Activated B cell treated with CpG ODN at 0.5 μM for 24 hours (primary cell): ENCODE measurements at regions of chr12 and their contacts with region 1.

Region 1: GRCh38 chr12:6778574-6779550 is 6.5 kb downstream of the LAG3 start:
- DNase-seq: peak; percentile 77
- ATAC-seq: peak; percentile 98
- H3K4me3 Mint-ChIP-seq: peak overlapping the region; percentile 74
- H3K27ac Mint-ChIP-seq: peak overlapping the region; percentile 4
- H3K4me1 Mint-ChIP-seq: peaks cover 9% of the 10 kb centered on the region
- H3K27me3 Mint-ChIP-seq: peaks cover 42% of the 10 kb centered on the region
- CTCF ChIP-seq: peak; percentile 68

Region 2: DNA sequence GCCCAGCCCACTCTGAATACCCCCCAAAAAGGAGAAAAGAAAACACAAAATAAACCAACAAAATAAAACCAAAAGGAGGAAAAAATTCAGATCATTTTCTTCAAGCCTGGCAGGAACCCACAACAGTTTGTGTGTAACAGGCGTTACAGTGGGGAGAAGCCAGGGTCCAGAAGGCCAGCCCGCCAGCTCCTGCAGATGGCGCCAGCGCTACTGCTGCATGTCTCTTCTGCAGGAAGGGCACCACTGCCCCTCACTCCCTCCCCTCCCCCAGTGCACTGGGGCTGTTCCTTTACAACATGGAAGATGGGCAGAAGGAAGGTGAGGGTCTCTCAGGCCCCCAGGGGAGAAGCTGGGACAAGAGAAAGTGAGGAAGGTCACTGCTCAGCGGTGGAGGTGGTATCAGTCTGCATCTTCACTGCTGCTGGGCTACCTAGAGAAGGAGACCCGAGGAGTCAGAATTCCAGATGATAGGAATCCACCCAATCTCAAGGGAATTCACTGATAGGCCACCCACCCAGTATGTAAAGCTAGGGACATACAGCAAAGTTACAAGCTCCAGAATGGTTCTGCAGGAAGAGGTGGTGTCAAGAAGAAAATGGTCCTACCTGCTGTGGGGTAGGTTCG is 208.5 kb before region 1 on chr12:
- CTCF ChIA-PET with region 1: no interaction called
- POLR2A ChIA-PET with region 1: no interaction called
- intact Hi-C with region 1: no loop called
- DNase-seq: peak; percentile 37
- ATAC-seq: no peak
- H3K4me3 Mint-ChIP-seq: no peak overlapping the region
- H3K27ac Mint-ChIP-seq: peak overlapping the region; percentile 41
- H3K4me1 Mint-ChIP-seq: peaks cover 28% of the 10 kb centered on the region
- H3K27me3 Mint-ChIP-seq: no peaks in the 10 kb centered on the region
- CTCF ChIP-seq: no peak

Region 3: DNA sequence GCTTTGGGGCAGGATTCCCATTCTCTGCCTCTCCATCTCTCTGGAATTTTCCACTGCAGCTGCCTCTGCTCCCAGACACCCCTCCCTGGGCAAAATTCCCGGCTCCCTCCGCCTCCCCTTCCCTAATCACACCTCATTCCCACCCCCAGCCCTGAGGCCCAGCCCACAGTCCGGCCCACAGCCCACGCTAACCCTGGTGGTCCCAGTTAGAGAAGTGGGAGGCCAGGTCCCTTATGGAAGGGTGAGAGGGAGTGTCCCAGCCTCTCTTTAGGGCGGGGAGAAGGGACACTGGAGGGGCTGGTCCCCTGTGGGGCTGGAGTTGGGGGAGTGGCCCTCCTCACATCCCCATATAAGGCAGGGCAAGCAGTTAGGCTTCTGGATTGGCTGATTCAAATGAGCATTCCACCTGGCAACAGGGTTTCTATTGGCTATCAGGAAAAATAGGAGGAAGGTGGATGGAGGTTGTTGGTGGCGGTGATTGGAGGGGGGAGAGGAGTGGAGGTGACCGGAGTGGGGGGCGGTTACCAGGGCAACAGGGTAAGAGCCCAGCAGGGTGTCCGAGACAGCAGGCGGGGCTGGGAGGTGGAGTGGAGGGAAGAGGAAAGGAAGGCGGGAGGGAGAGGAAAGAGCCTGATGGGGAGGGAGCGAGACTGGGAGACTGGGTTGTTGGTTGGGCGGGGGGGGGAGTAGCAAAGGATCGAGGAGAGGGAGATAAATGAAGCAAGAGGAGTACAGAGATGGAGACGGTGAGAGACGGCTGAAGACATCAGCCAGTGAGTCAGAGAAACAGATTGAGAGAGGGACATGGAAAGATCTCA is 14.6 kb before region 1 on chr12:
- CTCF ChIA-PET with region 1: interaction called, 10 read pairs
- POLR2A ChIA-PET with region 1: interaction called, 4 read pairs
- intact Hi-C with region 1: loop called (anchors 1 kb)
- DNase-seq: peak; percentile 26
- ATAC-seq: peak; percentile 83
- H3K4me3 Mint-ChIP-seq: peak overlapping the region; percentile 55
- H3K27ac Mint-ChIP-seq: no peak overlapping the region
- H3K4me1 Mint-ChIP-seq: peaks cover 29% of the 10 kb centered on the region
- H3K27me3 Mint-ChIP-seq: peaks cover 31% of the 10 kb centered on the region
- CTCF ChIP-seq: no peak

Region 4: DNA sequence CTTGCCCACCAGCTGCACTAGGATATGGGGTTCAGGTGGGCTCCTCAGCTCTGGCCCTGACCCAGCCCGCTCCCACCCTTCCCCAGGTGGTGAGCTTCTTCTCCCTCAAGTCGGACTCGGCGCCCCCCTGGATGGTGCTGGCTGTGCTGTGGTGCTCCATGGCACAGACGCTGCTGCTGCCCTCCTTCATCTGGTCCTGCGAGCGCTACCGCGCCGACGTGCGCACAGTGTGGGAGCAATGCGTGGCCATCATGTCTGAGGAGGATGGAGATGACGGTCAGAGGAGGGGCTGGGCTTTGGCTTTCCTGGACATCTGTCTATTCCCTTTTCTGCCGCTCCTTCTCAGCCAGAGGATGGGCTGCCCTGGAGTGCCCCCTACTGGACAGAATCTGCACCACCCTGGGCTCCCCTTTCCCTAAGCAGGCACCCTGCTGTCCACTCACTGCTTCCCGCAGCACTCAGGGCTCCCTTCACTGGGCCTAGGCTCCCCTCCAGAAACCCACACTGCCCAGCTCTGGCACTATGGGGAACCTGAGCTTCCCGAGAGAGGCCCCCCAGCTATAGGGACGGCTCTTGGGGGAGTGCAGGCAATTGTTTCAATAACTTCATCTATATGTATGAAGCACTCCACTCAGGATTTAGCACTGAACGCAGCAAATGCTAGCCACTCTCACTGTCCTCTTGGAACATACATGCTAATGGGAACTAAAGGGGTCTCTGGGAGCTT is 46.7 kb after region 1 on chr12:
- CTCF ChIA-PET with region 1: no interaction called
- POLR2A ChIA-PET with region 1: no interaction called
- intact Hi-C with region 1: loop called (anchors 1 kb)
- DNase-seq: peak; percentile 69
- ATAC-seq: peak; percentile 62
- H3K4me3 Mint-ChIP-seq: no peak overlapping the region
- H3K27ac Mint-ChIP-seq: no peak overlapping the region
- H3K4me1 Mint-ChIP-seq: peaks cover 32% of the 10 kb centered on the region
- H3K27me3 Mint-ChIP-seq: peaks cover 73% of the 10 kb centered on the region
- CTCF ChIP-seq: peak; percentile 47

Region 5: GRCh38 chr12:6873094-6874014 is 94.5 kb after region 1 on chr12 and contains the start of gene SPSB2:
- CTCF ChIA-PET with region 1: no interaction called
- POLR2A ChIA-PET with region 1: no interaction called
- intact Hi-C with region 1: no loop called
- DNase-seq: peak; percentile 100
- ATAC-seq: peak; percentile 88
- H3K4me3 Mint-ChIP-seq: peak within 1 kb of the TSS; percentile 88
- H3K27ac Mint-ChIP-seq: peak within 1 kb of the TSS; percentile 85
- H3K4me1 Mint-ChIP-seq: peaks cover 37% of the 10 kb centered on the region
- H3K27me3 Mint-ChIP-seq: no peaks in the 10 kb centered on the region
- CTCF ChIP-seq: no peak
- total RNA-seq, gene SPSB2: 14.4 and 16.2 TPM in 2 replicates

Region 6: DNA sequence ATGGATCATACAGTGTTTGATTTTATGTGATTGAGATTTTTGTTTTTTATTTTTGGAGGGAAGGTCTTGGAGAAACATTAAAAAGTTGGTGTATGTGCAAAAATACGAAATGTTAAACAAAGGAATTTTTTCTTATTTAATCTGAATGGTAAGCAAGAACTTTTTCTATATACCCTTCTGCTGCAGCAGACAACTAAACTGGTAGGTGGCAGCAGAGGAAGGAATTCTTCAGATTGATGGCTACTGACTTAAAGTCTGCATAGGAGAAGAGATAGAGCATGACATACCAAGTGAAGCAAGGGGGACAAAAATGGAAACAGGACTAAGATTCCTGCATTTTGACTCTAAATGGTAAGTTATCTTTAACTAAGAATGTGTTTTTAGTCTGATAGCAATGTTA is 2001.5 kb after region 1 on chr12:
- CTCF ChIA-PET with region 1: no interaction called
- POLR2A ChIA-PET with region 1: no interaction called
- intact Hi-C with region 1: no loop called
- DNase-seq: no peak
- ATAC-seq: no peak
- H3K4me3 Mint-ChIP-seq: no peak overlapping the region
- H3K27ac Mint-ChIP-seq: no peak overlapping the region
- H3K4me1 Mint-ChIP-seq: no peaks in the 10 kb centered on the region
- H3K27me3 Mint-ChIP-seq: no peaks in the 10 kb centered on the region
- CTCF ChIP-seq: no peak